Breast epithelium (tissue), 4 donors: ENCODE measurements at regions of chr11 and their contacts with region 1.

Region 1: DNA sequence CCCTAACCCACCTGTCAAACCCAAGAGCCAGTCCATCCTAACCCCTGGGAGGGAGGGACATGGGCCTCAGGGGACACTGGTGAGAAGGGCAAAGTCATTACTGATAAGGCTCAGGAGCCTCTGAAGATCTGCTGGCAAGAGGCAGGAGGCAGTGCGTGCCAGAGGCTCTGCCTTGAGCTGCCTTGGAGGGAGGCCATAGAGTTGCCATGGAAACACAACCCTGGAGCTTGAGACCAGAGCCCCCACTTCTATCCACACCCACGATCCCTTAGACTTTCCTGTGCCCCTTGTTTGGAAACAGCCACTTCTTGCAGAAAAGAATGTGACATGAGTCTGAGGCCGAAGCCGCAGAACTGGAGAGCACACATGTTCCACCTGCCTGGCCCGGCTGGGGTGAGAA is 89.7 kb upstream of the CSNK2A3 start:
- DNase-seq: no peak
- H3K4me3 ChIP-seq: no peak overlapping the region
- H3K27ac ChIP-seq: no peak overlapping the region
- H3K4me1 ChIP-seq: no peaks in the 10 kb centered on the region
- H3K27me3 ChIP-seq: no peaks in the 10 kb centered on the region
- CTCF ChIP-seq: no peak
- POLR2A ChIP-seq: no peak

Region 2: GRCh38 chr11:11422411-11423128 is 20.2 kb before region 1 on chr11:
- intact Hi-C with region 1: no loop called
- DNase-seq: no peak
- H3K4me3 ChIP-seq: no peak overlapping the region
- H3K27ac ChIP-seq: no peak overlapping the region
- H3K4me1 ChIP-seq: no peaks in the 10 kb centered on the region
- H3K27me3 ChIP-seq: no peaks in the 10 kb centered on the region
- CTCF ChIP-seq: no peak
- POLR2A ChIP-seq: no peak

Region 3: DNA sequence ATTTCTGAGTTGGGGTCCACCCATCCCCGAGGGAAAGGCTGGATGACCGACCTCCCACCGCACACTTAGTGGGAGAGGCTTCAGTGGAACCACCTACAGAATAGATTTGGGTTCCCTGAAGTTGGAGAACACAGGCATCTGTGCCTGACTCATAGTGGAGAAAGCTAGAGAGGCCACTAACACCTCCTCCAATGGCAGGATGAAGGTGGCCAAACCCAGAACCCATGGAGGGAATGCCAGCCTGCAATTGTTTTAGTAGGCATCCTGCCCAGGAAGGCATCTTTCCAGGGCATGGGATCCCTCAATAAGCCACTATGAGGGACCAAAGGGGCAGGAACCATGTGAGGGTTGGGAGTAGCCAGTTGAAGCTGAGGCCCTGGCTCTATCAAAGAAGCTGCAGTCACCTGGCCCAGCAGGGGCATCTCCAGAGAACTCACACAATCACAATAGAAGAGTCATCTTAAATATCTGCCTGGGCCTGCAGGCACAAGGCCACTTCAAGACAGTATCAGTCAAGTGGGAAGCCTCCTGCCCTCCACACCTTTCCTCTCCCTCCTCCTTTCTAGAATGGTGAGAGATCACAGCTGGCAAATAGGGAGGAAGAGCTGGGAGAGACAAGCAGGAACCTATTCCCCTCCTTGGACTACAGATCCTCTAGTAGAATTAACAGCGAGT is 34.3 kb after region 1 on chr11:
- intact Hi-C with region 1: loop called (anchors 1 kb)
- DNase-seq: no peak
- H3K4me3 ChIP-seq: no peak overlapping the region
- H3K27ac ChIP-seq: no peak overlapping the region
- H3K4me1 ChIP-seq: no peaks in the 10 kb centered on the region
- H3K27me3 ChIP-seq: no peaks in the 10 kb centered on the region
- CTCF ChIP-seq: no peak
- POLR2A ChIP-seq: no peak